ENCODE measurements at regions of chr1 and their contacts with region 1.

Region 1: DNA sequence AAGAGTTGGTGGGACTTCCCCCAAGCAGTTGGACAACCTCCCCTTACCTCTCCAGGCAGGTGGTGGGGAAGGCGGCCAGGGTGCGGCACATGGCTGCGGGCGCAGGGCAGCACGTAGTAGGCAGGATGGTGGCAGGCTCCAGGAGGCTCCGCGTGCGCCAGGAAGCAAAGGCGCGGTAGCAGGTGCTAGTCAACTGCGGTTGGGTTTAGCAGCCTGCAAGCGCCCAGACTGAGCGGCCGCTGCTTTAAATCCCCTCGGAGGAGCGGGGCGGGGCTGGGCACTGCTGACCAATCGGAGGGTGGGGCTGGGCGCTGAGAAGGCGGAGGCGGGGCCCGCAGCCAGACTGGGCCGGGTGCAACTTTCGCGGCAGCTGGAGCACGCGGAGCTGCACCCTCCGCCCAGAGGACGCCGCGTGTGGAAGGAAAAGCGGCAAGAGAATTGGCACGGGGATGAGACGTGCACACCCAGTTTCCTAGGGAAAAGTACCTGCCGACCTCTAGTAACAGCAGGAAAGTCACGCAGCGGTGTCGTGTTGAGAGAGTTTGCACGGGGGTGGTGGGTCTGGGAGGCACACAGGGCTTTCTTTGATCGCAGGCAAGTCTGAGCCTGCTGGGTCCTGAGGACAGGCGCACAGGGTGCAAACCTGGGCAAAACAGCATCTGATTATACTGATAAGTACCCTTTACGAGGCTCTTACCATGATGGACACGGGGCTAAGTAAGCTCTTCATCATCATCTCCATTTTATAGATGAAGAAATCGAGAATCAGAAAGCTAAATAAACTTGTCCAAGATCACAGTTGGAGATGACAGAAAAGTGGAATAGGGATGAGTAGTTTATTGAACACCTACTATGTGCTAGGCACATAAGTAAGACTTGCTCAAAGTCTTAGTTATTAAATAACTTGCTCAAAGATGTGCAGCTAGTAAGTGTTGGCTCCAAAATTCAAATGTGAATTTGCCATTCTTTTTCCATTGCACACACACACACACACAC is at the start of gene RGS16:
- DNase-seq: peak; percentile 97
- ATAC-seq: peak; percentile 93
- H3K4me3 Mint-ChIP-seq: peak within 1 kb of the TSS; percentile 2
- H3K27ac Mint-ChIP-seq: no peak within 1 kb of the TSS
- H3K4me1 Mint-ChIP-seq: peaks cover 41% of the 10 kb centered on the region
- H3K27me3 Mint-ChIP-seq: peaks cover 29% of the 10 kb centered on the region
- CTCF ChIP-seq: no peak
- total RNA-seq, gene RGS16: 33.8 to 35.6 TPM

Region 2: DNA sequence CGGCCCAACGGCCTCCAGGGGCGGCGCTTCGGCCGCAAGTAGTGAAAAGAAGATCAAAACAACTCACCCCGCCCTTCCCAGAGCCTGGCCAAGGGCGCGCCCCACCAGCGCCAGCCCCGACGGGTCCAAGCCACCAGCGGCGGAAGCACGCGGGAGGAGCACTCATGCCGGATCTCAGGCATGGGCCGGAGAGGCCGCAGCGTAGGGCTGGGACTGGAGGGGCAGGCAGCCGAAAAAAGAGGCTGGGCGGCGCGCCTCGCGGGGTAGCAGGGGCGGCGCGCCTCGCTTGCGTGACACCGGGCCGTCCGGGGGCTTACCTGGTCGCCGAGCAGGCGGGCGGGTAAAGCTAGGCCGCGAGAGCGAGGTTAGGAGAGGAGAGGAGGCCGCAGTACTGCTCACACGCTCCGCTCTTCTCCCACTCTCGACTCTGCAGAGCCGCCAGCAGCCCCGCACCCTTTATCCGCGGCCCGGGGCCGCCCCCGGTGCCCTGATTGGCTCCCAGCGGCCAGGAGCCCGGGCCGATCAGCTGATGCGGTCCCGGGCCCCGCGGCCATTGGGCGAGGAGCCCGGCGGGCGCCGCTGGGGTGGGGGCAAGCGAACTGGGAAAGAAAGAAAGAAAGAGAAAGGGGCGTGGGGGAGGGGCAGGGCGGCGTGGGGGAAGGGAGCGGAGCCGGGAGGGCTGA is 213.0 kb before region 1 on chr1 and contains the start of gene GLUL:
- CTCF ChIA-PET with region 1: no interaction called
- POLR2A ChIA-PET with region 1: no interaction called
- intact Hi-C with region 1: no loop called
- DNase-seq: peak; percentile 67
- ATAC-seq: peak; percentile 77
- H3K4me3 Mint-ChIP-seq: peak within 1 kb of the TSS; percentile 78
- H3K27ac Mint-ChIP-seq: peak within 1 kb of the TSS; percentile 77
- H3K4me1 Mint-ChIP-seq: peaks cover 15% of the 10 kb centered on the region
- H3K27me3 Mint-ChIP-seq: peaks cover 24% of the 10 kb centered on the region
- CTCF ChIP-seq: no peak
- total RNA-seq, gene GLUL: 50.6 to 52.8 TPM

Region 3: GRCh38 chr1:182575539-182576149 is 28.8 kb before region 1 on chr1:
- CTCF ChIA-PET with region 1: no interaction called
- POLR2A ChIA-PET with region 1: no interaction called
- intact Hi-C with region 1: no loop called
- DNase-seq: no peak
- ATAC-seq: no peak
- H3K4me3 Mint-ChIP-seq: no peak overlapping the region
- H3K27ac Mint-ChIP-seq: no peak overlapping the region
- H3K4me1 Mint-ChIP-seq: peaks cover 3% of the 10 kb centered on the region
- H3K27me3 Mint-ChIP-seq: no peaks in the 10 kb centered on the region
- CTCF ChIP-seq: no peak

Region 4: GRCh38 chr1:182588500-182589452 is 15.7 kb before region 1 on chr1 and contains the start of gene RNASEL:
- CTCF ChIA-PET with region 1: interaction called, 40 read pairs
- POLR2A ChIA-PET with region 1: interaction called, 23 read pairs
- intact Hi-C with region 1: no loop called
- DNase-seq: peak; percentile 63
- ATAC-seq: peak; percentile 92
- H3K4me3 Mint-ChIP-seq: peak within 1 kb of the TSS; percentile 98
- H3K27ac Mint-ChIP-seq: peak within 1 kb of the TSS; percentile 97
- H3K4me1 Mint-ChIP-seq: peaks cover 42% of the 10 kb centered on the region
- H3K27me3 Mint-ChIP-seq: no peaks in the 10 kb centered on the region
- CTCF ChIP-seq: no peak
- total RNA-seq, gene RNASEL: 3.7 TPM

Region 5: DNA sequence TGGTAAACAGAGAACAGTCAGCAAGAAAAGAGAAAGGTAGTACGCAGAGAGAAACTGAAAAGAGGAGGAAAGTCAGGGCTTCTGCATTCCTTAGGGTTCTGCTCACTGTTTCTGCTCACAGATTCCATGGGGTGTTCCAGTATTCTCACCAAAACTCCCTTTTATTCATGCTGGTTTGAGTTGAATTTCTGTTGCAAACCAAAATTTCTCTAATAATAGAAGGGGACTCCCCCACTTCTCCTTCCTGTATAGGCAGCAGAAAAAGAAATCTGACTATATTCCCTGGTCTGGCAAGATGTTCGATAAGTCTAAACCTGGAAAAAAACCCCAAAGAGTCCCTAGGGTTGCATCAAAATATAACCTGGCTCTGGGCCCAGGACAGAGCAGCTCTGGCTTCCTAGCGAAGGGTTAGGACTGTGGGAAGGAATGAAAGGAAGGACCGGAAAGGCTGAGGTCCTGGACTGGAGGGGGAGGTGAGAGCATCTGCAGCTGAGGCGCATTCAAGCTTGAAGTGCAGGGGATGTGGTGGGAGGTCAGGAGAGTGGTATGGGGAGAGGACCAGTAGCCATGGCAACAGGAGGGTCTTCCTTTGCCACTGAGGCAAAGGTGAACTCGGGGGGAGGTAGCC is 18.5 kb after region 1 on chr1:
- CTCF ChIA-PET with region 1: interaction called, 13 read pairs
- POLR2A ChIA-PET with region 1: interaction called, 11 read pairs
- intact Hi-C with region 1: no loop called
- DNase-seq: no peak
- ATAC-seq: no peak
- H3K4me3 Mint-ChIP-seq: no peak overlapping the region
- H3K27ac Mint-ChIP-seq: no peak overlapping the region
- H3K4me1 Mint-ChIP-seq: peaks cover 79% of the 10 kb centered on the region
- H3K27me3 Mint-ChIP-seq: peaks cover 16% of the 10 kb centered on the region
- CTCF ChIP-seq: no peak

Region 6: DNA sequence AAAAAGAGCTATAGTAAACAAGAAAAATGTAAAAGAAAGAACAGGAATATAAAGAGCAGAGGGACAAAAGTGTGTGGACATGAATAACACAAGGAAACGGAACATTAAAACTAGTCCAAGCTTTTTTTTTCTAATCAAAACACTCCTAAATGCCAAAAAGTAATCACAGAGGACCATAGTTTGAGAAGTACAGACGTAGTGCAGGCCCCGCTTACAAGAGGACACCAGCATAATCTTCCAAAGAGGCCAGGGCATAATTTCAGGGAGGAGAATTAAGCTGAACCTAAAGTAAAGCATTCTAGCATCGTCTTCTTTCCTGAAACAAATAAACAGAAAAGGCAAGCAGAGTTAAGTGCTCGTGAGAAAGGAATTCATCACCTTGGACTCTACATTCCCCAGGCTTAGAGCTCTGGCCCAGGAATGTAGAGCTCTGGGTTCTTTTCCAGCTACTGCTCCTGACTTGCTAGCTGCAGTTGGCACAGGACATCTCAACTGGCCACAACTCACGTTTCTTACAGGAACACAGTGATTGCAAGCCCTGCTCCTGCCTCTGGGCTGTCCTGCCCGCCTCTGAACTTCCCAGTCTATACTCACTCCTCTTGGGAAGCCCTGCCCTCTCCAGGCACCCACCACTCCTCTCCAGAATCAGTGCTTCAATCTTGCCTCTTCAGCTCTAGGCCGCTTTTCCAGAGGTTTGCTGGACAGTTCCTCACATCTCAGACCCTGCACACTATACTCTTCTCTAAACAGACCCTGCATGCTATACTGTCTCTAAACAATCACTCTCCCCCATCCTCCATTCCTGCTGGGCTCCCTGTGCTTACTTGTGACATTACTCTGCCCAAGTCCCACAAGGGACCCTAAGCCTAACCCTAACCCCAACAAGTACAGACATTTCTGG is 70.1 kb after region 1 on chr1:
- CTCF ChIA-PET with region 1: interaction called, 10 read pairs
- POLR2A ChIA-PET with region 1: no interaction called
- intact Hi-C with region 1: no loop called
- DNase-seq: no peak
- ATAC-seq: no peak
- H3K4me3 Mint-ChIP-seq: no peak overlapping the region
- H3K27ac Mint-ChIP-seq: no peak overlapping the region
- H3K4me1 Mint-ChIP-seq: no peaks in the 10 kb centered on the region
- H3K27me3 Mint-ChIP-seq: peaks cover 25% of the 10 kb centered on the region
- CTCF ChIP-seq: no peak

Region 7: DNA sequence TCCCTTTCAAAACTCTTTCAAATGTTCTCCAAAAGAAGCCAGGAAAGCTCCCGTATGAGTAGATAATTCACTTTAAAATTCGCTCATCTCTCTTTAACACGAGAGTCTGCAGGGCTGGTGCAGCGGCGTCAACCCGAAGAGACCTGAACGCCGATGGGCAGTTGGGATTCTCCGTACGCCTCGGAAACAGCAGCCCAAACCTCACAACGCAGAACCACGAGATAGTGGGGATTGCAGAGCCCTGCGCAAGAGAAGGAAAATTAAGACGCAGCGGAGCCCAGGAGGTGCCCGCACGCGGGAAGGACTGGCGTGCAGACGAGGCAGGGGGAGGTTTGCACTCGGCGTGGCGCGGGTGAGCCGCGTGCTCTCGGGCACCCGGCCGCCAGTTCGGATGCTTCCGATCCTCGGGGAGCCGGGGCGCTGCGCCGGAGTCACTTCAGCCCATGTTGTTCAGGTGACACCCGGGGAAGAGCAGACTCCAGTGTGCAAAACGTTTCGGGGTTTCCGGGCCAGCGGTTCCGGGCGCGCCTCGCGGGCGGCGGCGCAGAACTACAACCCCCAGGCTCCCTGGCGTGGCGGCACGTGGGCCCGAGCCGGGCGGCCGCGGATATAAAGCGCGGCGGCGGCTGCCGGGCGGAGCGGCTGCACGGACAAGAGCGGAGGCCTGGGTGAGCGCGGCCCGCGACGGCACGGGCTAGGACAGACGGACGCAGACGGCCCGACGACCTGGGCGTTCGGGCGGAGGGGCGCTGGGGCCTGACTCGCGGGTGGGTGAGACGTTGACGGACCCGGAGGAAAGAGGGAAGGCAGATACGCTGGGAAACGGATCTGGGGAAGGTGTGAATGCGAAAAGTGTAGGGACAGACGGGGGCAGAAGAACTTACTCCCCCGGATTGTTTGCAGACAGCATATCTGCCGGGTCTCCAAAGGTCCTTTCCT is 184.9 kb after region 1 on chr1 and contains the start of gene NPL:
- CTCF ChIA-PET with region 1: interaction called, 1,003 read pairs
- POLR2A ChIA-PET with region 1: interaction called, 8 read pairs
- intact Hi-C with region 1: loop called (anchors 1 kb)
- DNase-seq: peak; percentile 85
- ATAC-seq: peak; percentile 93
- H3K4me3 Mint-ChIP-seq: peak within 1 kb of the TSS; percentile 82
- H3K27ac Mint-ChIP-seq: peak within 1 kb of the TSS; percentile 66
- H3K4me1 Mint-ChIP-seq: peaks cover 13% of the 10 kb centered on the region
- H3K27me3 Mint-ChIP-seq: peaks cover 10% of the 10 kb centered on the region
- CTCF ChIP-seq: no peak
- total RNA-seq, gene NPL: 4.5 to 4.9 TPM

Measured in activated CD8-positive, alpha-beta T cell treated with anti-CD3 and anti-CD28 coated beads for 36 hours (primary cell).